Aorta (tissue), 5 donors: ENCODE measurements at regions of chr16 and their contacts with region 1.

Region 1: DNA sequence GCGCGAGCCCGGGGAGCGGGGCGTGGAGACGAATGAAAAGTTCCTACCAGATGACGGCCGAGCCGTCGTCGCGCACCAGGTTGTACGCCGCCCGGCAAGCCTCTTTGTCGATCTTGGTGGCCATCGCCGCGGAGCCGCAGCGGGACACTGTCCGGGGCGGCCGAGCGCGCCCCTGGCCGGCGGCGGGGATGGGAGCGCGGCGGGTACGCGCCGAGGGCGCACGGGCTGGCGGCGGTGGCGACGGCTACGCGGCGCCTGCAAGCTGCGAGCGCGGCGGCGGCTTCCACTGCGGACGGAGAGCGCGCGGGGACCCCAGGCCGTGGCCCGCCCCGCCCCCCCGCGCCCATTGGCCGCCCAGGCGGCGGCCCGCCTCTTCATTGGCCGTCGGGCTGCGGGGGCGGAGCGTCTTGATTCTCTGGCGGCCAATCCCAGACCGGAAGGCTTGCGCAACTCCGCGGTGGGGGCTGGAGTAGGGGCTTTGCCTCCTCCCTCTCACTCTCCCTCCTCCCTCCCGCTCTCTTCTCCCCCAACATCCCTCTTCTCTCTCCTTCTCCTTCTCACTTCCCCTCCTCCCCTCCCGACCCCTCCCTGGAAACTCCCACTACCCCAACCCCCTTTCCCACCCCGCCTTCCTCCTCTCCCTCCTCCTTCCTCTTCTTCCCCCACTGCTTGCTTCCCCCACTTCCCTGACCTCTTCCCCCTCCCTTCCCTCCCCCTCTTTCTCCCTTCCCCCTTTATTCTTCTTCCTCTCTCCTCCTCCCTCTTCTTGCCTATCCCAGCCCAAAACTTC is at the start of gene COTL1:
- DNase-seq: peak; percentile 99
- ATAC-seq: peak; percentile 91
- H3K4me3 ChIP-seq: peak within 1 kb of the TSS; percentile 24 to 62
- H3K27ac ChIP-seq: peak within 1 kb of the TSS in 1 of 2 donors; percentile 31
- H3K4me1 ChIP-seq: peaks cover 0 to 2% of the 10 kb centered on the region in 2 donors
- H3K27me3 ChIP-seq: peaks cover 0 to 2% of the 10 kb centered on the region in 2 donors
- total RNA-seq, gene COTL1: 61.9 to 69.9 TPM

Region 2: DNA sequence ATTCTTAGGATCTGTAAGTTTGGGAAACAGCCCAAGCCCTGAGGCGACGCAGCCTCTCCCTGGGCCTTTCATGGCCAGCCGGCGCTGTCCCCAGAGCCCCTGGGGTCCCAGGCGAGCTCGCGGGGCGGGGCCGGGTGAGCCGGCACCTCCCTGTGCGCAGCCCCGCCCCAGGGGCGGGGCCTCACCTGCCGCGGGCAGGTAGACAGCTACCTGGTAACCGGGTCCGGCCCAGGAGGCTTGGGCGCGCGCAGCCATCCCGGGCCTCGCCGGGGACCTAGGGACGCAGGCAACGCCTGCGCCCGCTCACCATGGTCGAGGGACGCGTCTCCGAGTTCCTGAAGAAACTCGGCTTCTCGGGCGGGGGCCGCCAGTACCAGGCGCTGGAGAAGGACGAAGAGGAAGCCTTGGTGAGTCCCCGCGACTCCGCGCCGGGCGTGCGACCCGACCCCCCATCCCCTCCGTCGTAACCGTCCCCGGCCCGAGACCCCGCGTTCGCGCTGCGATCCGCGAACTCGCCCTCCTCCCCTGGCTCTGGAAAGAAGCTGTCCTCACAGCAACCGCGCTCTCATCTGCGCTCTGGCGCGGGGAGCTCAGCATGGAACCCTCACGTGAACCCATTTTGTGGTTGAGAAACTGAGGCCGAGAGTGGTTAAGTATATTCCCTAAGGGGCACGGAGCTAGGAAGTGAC is 249.5 kb before region 1 on chr16 and contains the start of gene ATP2C2:
- intact Hi-C with region 1: no loop called
- DNase-seq: no peak
- ATAC-seq: no peak
- H3K4me3 ChIP-seq: no peak within 1 kb of the TSS
- H3K27ac ChIP-seq: no peak within 1 kb of the TSS
- H3K4me1 ChIP-seq: no peaks in the 10 kb centered on the region
- H3K27me3 ChIP-seq: no peaks in the 10 kb centered on the region
- total RNA-seq, gene ATP2C2: 0.49 TPM in 1 of 2 donors, not detected in the other

Region 3: DNA sequence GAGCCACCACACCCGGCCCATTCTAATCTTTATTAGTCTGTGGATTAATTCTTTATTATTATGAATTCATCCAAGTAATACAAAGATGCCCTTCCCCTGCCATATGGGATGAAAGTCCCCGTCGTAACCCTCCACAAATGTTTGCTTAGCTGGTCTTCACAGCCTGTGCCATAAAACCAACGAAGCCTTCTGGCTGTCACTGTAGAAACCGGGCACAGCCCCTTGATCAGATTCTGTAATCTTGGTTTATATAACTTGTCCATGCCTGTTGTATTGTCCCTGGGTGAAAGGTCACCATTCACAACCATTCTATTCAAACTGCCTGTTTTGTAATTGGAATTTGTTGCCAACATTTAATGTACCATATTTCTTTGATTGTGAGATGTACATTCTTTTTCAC is 183.2 kb before region 1 on chr16:
- intact Hi-C with region 1: no loop called
- DNase-seq: no peak
- ATAC-seq: no peak
- H3K4me3 ChIP-seq: no peak overlapping the region
- H3K27ac ChIP-seq: no peak overlapping the region
- H3K4me1 ChIP-seq: no peaks in the 10 kb centered on the region
- H3K27me3 ChIP-seq: no peaks in the 10 kb centered on the region

Region 4: GRCh38 chr16:84504420-84505248 is 113.4 kb before region 1 on chr16 and contains the start of gene MEAK7:
- intact Hi-C with region 1: loop called in 1 of 2 experiments (anchors 2 kb)
- DNase-seq: peak; percentile 99
- ATAC-seq: peak; percentile 98
- H3K4me3 ChIP-seq: peak within 1 kb of the TSS; percentile 50 to 71
- H3K27ac ChIP-seq: peak within 1 kb of the TSS in 1 of 2 donors; percentile 60
- H3K4me1 ChIP-seq: peaks cover 0 to 5% of the 10 kb centered on the region in 2 donors
- H3K27me3 ChIP-seq: no peaks in the 10 kb centered on the region
- total RNA-seq, gene MEAK7: 17.4 to 23.9 TPM

Region 5: DNA sequence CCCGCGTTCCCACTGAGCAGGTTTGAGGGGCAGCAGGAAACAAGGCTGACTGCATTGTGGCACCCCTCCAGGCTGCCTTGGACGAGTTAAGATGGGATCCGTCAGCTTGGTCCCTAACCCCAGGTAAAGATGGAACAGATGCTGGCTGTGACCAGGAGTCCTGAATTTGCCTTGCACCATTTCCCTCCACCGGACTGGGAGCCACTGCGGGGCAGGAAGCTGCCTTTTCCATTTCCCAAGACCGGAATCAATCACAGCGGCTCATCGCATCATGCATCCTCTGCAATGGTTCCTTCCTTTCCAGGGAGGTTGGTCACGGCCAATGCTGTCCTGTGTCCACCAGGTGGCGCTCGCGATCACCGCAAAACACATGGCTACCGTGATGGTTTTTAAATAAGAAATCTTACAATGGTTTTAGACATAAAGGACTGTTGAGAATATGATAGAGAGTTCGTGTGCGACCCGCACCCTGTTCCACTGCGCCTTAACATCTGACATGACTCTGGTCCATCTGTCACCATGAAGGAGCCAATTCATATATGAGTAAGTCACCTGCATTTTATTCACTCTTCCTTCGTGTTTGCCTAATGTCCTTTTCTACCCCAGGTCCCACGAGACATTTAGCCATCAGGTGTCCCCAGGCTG is 106.7 kb before region 1 on chr16:
- intact Hi-C with region 1: loop called (anchors 1 kb)
- DNase-seq: peak; percentile 88 to 96
- ATAC-seq: peak; percentile 82
- H3K4me3 ChIP-seq: no peak overlapping the region
- H3K27ac ChIP-seq: no peak overlapping the region
- H3K4me1 ChIP-seq: no peaks in the 10 kb centered on the region
- H3K27me3 ChIP-seq: no peaks in the 10 kb centered on the region

Region 6: GRCh38 chr16:84532291-84532724 is 85.7 kb before region 1 on chr16:
- intact Hi-C with region 1: loop called (anchors 5 kb)
- DNase-seq: peak; percentile 85
- ATAC-seq: peak; percentile 79
- H3K4me3 ChIP-seq: no peak overlapping the region
- H3K27ac ChIP-seq: peak overlapping the region in 1 of 2 donors; percentile 78
- H3K4me1 ChIP-seq: peaks cover 0 to 7% of the 10 kb centered on the region in 2 donors
- H3K27me3 ChIP-seq: no peaks in the 10 kb centered on the region

Region 7: DNA sequence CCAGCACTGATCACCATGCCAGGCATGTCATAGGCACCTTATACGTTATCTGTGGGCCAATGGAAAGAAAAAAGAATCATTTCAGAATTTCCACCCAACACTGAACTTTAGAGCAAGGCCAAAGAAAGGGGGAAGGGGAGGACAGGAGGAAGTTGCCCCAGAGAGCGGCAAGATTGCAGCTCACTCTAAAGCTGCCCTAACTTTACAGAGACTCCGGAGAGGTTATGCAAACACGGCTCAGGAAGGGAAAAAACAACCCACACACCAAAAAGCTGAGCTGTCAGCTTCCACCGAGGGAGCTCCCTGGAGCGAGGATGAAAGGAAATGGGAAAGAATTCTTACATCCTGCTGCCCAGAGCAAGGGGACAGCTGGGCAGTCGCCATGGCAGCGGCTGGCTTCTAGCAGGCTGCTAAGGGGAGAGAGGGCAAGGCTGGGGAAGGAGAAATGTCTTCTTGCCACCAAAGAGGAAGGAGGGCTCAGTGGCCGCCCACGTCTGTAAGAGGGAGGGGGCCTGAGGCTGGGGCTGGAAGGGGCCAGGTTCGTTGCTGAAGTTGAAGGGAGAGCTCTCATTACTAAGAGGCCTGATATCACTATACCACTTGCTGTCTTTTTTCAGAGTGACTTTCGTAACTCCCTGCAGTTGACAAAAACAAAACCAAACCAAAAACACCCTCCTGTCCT is 18.3 kb before region 1 on chr16:
- intact Hi-C with region 1: no loop called
- DNase-seq: peak; percentile 83 to 84
- ATAC-seq: peak; percentile 44
- H3K4me3 ChIP-seq: no peak overlapping the region
- H3K27ac ChIP-seq: no peak overlapping the region
- H3K4me1 ChIP-seq: peaks cover 0 to 2% of the 10 kb centered on the region in 2 donors
- H3K27me3 ChIP-seq: no peaks in the 10 kb centered on the region

Region 8: DNA sequence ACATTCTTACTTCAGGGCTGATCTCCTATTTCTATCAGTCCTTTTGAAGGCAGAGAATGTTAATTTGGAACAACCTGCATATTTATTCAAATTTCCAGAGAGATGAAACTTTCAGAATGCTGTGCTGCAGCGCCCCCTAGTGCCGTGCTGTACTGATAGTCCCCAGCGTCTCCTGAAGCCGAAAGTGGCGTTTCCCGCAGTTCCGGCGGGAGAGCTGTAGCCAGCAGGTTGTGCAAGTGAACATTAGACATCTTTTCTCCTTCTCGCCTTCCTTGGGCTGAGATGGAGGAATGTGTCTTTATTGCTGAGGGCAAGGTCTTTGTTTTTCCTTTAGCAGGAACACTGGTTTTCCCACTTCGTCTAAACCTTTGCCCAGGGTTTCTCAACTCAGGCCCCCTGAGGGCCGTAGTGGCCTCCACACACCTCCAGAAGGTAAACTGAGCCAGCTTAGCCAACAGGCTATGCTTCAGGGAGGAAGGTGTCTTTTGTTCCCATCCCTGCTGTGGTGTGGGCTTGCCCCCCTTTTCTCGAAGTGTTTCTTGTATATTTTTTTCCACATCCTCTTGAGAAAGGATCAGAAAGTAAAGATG is 108.2 kb after region 1 on chr16:
- intact Hi-C with region 1: loop called (anchors 5 kb)
- DNase-seq: peak; percentile 93 to 98
- ATAC-seq: peak; percentile 91
- H3K4me3 ChIP-seq: no peak overlapping the region
- H3K27ac ChIP-seq: no peak overlapping the region
- H3K4me1 ChIP-seq: peaks cover 0 to under 1% of the 10 kb centered on the region in 2 donors
- H3K27me3 ChIP-seq: no peaks in the 10 kb centered on the region

Region 9: DNA sequence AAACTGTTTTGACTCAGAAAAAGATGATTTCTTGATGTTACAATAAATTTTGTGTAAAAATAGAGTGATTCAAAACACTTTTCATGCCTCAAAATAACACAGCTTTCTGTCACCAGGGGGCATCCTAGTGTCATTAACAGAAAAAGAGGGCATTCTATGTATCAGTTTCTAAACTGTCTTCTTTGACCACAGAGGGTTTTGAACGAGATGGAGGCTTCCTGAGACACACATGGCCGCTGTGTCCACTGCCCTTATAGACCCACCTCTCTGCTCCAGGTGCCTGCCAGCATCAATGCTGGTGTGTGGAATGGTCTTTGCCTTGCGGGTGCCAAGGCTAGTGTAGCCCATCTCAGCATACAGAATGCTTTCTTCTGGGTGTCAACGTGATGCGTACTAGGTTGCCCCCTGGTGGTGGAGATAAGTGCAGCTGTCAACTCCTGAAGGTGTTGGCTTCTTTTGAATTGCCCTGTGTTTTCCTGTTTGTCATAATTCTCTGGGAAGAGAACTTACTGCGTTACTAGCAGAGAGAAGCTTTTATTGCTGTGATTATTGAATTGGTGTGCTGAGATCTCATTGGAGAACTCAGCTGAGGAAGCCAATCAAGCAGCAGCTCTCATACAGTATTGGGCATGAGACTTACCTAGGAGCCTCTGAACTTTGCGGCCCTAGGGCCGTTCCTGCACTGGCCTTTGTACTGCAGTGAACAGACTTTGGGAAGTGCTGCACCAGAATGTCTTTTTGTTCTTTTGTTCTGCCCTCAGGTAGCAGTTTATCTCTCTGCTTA is 120.5 kb after region 1 on chr16:
- intact Hi-C with region 1: loop called in 1 of 2 experiments (anchors 1 kb)
- DNase-seq: peak; percentile 78 to 86
- ATAC-seq: peak; percentile 85
- H3K4me3 ChIP-seq: no peak overlapping the region
- H3K27ac ChIP-seq: no peak overlapping the region
- H3K4me1 ChIP-seq: no peaks in the 10 kb centered on the region
- H3K27me3 ChIP-seq: no peaks in the 10 kb centered on the region

Region 10: DNA sequence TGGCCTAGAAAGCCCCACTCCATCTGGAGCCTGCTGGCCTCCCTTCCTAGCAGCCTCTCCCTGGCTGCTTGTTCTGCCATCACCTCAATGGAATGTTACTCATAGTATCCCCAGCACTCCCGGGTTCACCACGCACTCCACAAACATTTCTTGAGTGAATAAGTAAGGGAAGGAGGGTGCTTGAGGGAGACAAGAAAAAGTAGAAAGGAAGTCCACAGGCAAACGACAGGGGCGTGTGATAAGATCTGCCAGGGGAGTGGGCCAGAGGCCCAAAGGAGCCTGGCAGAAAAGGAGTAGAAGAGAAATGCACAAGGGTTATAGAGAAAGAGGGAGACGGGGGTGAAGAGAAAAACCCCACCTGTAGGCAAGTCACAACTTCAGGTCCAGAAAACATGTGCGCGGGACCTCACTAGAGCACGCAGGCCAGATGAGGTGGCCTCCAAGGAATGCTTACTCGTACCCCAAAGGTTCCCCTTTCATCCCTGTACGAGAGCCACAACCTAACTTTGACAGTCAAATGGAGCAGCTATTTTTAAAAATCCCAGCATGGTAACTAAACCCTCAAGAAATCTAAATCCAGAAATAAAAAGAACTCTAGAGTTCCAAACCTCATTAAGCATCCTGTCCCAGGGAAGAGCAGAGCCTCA is 386.7 kb after region 1 on chr16:
- intact Hi-C with region 1: no loop called
- DNase-seq: peak in 1 of 2 donors; percentile 77
- ATAC-seq: peak; percentile 60
- H3K4me3 ChIP-seq: no peak overlapping the region
- H3K27ac ChIP-seq: peak overlapping the region; percentile 83 to 89
- H3K4me1 ChIP-seq: peaks cover 5 to 6% of the 10 kb centered on the region in 2 donors
- H3K27me3 ChIP-seq: no peaks in the 10 kb centered on the region